ENCODE measurements at regions of chr18 and their contacts with region 1.

Region 1: GRCh38 chr18:12726774-12727550 is 24.1 kb downstream of the PSMG2 start:
- DNase-seq: peak; percentile 34
- H3K4me3 ChIP-seq: no peak overlapping the region
- H3K27ac ChIP-seq: no peak overlapping the region
- H3K4me1 ChIP-seq: no peaks in the 10 kb centered on the region
- H3K27me3 ChIP-seq: no peaks in the 10 kb centered on the region
- CTCF ChIP-seq: peak; percentile 88 to 92 (median 90)
- EP300 ChIP-seq: no peak
- POLR2A ChIP-seq: no peak

Region 2: GRCh38 chr18:13159579-13159978 is 432.6 kb after region 1 on chr18:
- in situ Hi-C with region 1: loop called in 2 of 4 experiments (anchors 25 kb)
- intact Hi-C with region 1: no loop called
- DNase-seq: no peak
- H3K4me3 ChIP-seq: no peak overlapping the region
- H3K27ac ChIP-seq: no peak overlapping the region
- H3K4me1 ChIP-seq: no peaks in the 10 kb centered on the region
- H3K27me3 ChIP-seq: no peaks in the 10 kb centered on the region
- CTCF ChIP-seq: peak; percentile 71 to 83 (median 78)
- EP300 ChIP-seq: no peak
- POLR2A ChIP-seq: no peak

Measured in transverse colon (tissue), 4 donors.